ENCODE measurements at regions of chr9 and their contacts with region 1.

Region 1: GRCh38 chr9:6681147-6681956 is 35.8 kb upstream of the GLDC start:
- DNase-seq: peak; percentile 99
- H3K4me3 ChIP-seq: peak overlapping the region; percentile 68 to 85 (median 81)
- H3K27ac ChIP-seq: peak overlapping the region; percentile 84
- H3K4me1 ChIP-seq: peaks cover 5% of the 10 kb centered on the region
- H3K27me3 ChIP-seq: no peaks in the 10 kb centered on the region
- CTCF ChIP-seq: no peak
- POLR2A ChIP-seq: peak; percentile 93

Region 2: GRCh38 chr9:6008169-6008979 is 673.0 kb before region 1 on chr9:
- CTCF ChIA-PET with region 1: no interaction called
- POLR2A ChIA-PET with region 1: interaction called, 7 read pairs
- dilution Hi-C with region 1: no loop called
- intact Hi-C with region 1: loop called (anchors 5 kb)
- DNase-seq: peak; percentile 98
- H3K4me3 ChIP-seq: peak overlapping the region; percentile 65 to 98 (median 89)
- H3K27ac ChIP-seq: peak overlapping the region; percentile 60
- H3K4me1 ChIP-seq: peaks cover 22% of the 10 kb centered on the region
- H3K27me3 ChIP-seq: no peaks in the 10 kb centered on the region
- CTCF ChIP-seq: no peak
- POLR2A ChIP-seq: peak; percentile 50

Region 3: GRCh38 chr9:6272229-6272598 is 409.1 kb before region 1 on chr9:
- CTCF ChIA-PET with region 1: no interaction called
- POLR2A ChIA-PET with region 1: no interaction called
- dilution Hi-C with region 1: no loop called
- intact Hi-C with region 1: no loop called
- DNase-seq: no peak
- H3K4me3 ChIP-seq: no peak overlapping the region
- H3K27ac ChIP-seq: no peak overlapping the region
- H3K4me1 ChIP-seq: no peaks in the 10 kb centered on the region
- H3K27me3 ChIP-seq: peaks cover 0 to 2% of the 10 kb centered on the region in 2 experiments
- CTCF ChIP-seq: no peak
- POLR2A ChIP-seq: no peak

Region 4: GRCh38 chr9:6584881-6585597 is 96.3 kb before region 1 on chr9:
- CTCF ChIA-PET with region 1: interaction called, 8 read pairs
- POLR2A ChIA-PET with region 1: no interaction called
- dilution Hi-C with region 1: no loop called
- intact Hi-C with region 1: loop called (anchors 5 kb)
- DNase-seq: peak; percentile 58
- H3K4me3 ChIP-seq: no peak overlapping the region
- H3K27ac ChIP-seq: no peak overlapping the region
- H3K4me1 ChIP-seq: no peaks in the 10 kb centered on the region
- H3K27me3 ChIP-seq: peaks cover 0 to 2% of the 10 kb centered on the region in 2 experiments
- CTCF ChIP-seq: peak; percentile 16 to 23
- POLR2A ChIP-seq: no peak

Region 5: DNA sequence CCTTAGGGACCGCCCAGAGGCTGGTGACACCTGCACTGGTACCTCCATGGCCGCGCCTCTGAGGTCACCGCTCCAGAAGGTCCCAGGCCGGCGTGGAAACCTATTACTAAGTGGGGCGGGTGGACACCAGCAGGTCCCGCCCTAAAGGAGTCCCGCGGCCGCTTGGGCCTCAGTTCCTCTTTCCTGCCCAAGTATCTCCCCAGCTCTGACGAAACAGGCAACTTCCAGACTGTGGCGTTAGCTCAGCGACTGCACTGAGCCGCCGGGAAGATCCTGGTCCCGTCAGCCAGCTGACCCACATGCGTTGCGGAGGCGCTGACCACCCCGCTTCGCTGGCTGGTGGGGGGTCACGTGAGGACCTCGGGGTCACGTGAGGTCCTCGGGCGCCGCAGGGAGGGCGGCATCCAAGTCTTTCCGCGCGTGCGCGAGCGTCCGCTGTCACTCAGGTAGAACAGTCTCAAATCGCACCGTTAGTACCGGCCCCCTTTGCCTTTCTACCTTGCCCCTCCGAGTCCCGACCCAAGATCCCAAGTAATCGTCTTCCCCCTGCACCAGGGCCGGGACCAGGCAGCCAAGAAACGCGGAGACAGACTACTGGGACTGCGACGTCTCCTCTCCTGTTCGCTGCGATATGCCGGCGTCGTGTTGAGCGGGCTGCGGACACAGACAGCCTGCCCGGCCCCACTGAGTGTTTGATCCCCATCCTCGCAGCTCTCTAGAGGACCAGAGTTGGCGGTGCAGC is 22.7 kb after region 1 on chr9:
- CTCF ChIA-PET with region 1: interaction called, 4 read pairs
- POLR2A ChIA-PET with region 1: interaction called, 5 read pairs
- dilution Hi-C with region 1: no loop called
- intact Hi-C with region 1: loop called (anchors 1 kb)
- DNase-seq: peak; percentile 86
- H3K4me3 ChIP-seq: peak overlapping the region; percentile 21 to 61 (median 53)
- H3K27ac ChIP-seq: peak overlapping the region; percentile 16
- H3K4me1 ChIP-seq: peaks cover 5% of the 10 kb centered on the region
- H3K27me3 ChIP-seq: no peaks in the 10 kb centered on the region
- CTCF ChIP-seq: no peak
- POLR2A ChIP-seq: peak; percentile 79

Region 6: GRCh38 chr9:6788162-6789016 is 107.0 kb after region 1 on chr9:
- CTCF ChIA-PET with region 1: no interaction called
- POLR2A ChIA-PET with region 1: no interaction called
- dilution Hi-C with region 1: no loop called
- intact Hi-C with region 1: loop called (anchors 10 kb)
- DNase-seq: peak; percentile 86
- H3K4me3 ChIP-seq: peak overlapping the region in 1 of 3 experiments; percentile 50
- H3K27ac ChIP-seq: peak overlapping the region; percentile 84
- H3K4me1 ChIP-seq: peaks cover 21% of the 10 kb centered on the region
- H3K27me3 ChIP-seq: no peaks in the 10 kb centered on the region
- CTCF ChIP-seq: no peak
- POLR2A ChIP-seq: no peak

Region 7: GRCh38 chr9:8053530-8053929 is 1372.2 kb after region 1 on chr9:
- CTCF ChIA-PET with region 1: no interaction called
- POLR2A ChIA-PET with region 1: no interaction called
- dilution Hi-C with region 1: no loop called
- intact Hi-C with region 1: no loop called
- DNase-seq: no peak
- H3K4me3 ChIP-seq: no peak overlapping the region
- H3K27ac ChIP-seq: no peak overlapping the region
- H3K4me1 ChIP-seq: no peaks in the 10 kb centered on the region
- H3K27me3 ChIP-seq: no peaks in the 10 kb centered on the region
- CTCF ChIP-seq: no peak
- POLR2A ChIP-seq: no peak